ENCODE measurements at regions of chr10 and their contacts with region 1.

Region 1: DNA sequence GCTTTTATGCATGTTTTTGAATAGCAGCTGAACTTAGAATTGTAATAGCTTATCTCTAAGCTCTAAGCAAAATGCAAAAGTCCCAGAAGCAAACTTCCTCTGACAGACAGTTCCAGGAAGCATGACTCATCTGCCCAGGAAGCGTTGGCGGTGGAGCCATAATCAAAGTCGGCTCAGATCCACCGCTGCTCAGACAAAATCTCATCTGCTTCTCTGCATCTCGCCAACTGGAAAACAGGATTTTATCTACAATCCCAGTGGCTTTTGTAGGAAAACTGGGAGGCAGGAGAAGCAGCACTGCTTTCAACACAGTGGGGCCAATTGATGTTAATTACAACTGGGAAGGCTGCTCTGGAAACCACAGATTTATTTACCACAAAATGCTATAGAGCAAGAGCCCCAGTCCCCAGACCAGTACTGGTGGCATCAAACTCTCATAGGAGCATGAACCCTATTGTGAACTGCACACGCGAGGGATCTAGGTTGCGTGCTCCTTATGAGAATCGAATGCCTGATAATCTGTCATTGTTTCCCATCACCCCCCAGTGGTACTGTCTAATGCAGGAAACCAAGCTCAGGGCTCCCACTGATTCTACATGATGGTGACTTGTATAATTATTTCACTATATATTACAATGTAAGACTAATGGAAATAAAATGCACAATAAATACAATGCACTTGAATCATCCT is 99.9 kb downstream of the CUBN start:
- DNase-seq: peak; percentile 81 to 97 (median 93)
- H3K4me3 ChIP-seq: peak overlapping the region in 2 of 3 experiments; percentile 35 to 56
- H3K4me3 Mint-ChIP-seq: peak overlapping the region; percentile 47 to 71
- H3K27ac ChIP-seq: peak overlapping the region; percentile 64 to 89
- H3K27ac Mint-ChIP-seq: peak overlapping the region; percentile 87 to 96 (median 92)
- H3K4me1 ChIP-seq: peaks cover 74 to 93% of the 10 kb centered on the region in 2 donors
- H3K4me1 Mint-ChIP-seq: peaks cover 75% of the 10 kb centered on the region
- H3K27me3 ChIP-seq: no peaks in the 10 kb centered on the region
- H3K27me3 Mint-ChIP-seq: peaks cover 0 to 2% (median 0%) of the 10 kb centered on the region in 3 donors
- CTCF ChIP-seq: no peak

Region 2: GRCh38 chr10:17075533-17076359 is 46.0 kb after region 1 on chr10:
- intact Hi-C with region 1: loop called in 1 of 2 experiments (anchors 2 kb)
- DNase-seq: peak; percentile 83 to 96 (median 93)
- H3K4me3 ChIP-seq: no peak overlapping the region
- H3K4me3 Mint-ChIP-seq: peak overlapping the region in 1 of 2 donors; percentile 35
- H3K27ac ChIP-seq: peak overlapping the region; percentile 72 to 88
- H3K27ac Mint-ChIP-seq: peak overlapping the region; percentile 91 to 99 (median 97)
- H3K4me1 ChIP-seq: peaks cover 20 to 32% of the 10 kb centered on the region in 2 donors
- H3K4me1 Mint-ChIP-seq: peaks cover 44% of the 10 kb centered on the region
- H3K27me3 ChIP-seq: no peaks in the 10 kb centered on the region
- H3K27me3 Mint-ChIP-seq: peaks cover 0 to 6% (median 2%) of the 10 kb centered on the region in 3 donors
- CTCF ChIP-seq: no peak

Region 3: DNA sequence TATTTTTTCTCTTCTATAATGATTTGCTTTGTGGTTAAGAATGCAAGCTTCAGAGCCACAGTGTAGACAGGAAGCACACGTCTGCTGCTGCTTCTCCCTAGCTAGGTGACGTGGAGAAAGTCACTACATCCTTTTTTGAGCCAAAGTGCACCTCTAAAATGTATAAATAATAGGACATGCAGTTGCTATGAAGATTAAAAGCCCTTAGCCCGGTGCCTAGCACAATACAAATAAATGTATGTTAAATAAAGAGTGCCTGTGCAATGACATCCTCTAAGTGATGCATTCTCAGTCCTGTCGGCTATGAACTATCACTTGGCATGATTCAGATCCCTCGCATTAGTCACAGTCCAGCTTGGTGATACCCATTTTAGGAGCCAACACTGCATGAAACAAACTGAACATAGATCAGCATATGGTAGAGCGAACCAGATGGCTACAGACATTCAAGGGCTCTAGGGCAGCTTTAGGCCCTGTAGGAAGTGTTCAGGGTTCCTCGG is 176.5 kb after region 1 on chr10:
- intact Hi-C with region 1: loop called (anchors 5 kb)
- DNase-seq: peak; percentile 57 to 96 (median 94)
- H3K4me3 ChIP-seq: no peak overlapping the region
- H3K4me3 Mint-ChIP-seq: peak overlapping the region in 1 of 2 donors; percentile 45
- H3K27ac ChIP-seq: peak overlapping the region; percentile 15 to 55
- H3K27ac Mint-ChIP-seq: peak overlapping the region; percentile 91 to 99 (median 98)
- H3K4me1 ChIP-seq: peaks cover 19 to 31% of the 10 kb centered on the region in 2 donors
- H3K4me1 Mint-ChIP-seq: peaks cover 32% of the 10 kb centered on the region
- H3K27me3 ChIP-seq: no peaks in the 10 kb centered on the region
- H3K27me3 Mint-ChIP-seq: peaks cover 0 to 4% (median 0%) of the 10 kb centered on the region in 3 donors
- CTCF ChIP-seq: no peak

Measured in CD14-positive monocyte (primary cell).